Activated CD4-positive, alpha-beta memory T cell treated with anti-CD3 and anti-CD28 coated beads for 36 hours (primary cell): ENCODE measurements at regions of chr2 and their contacts with region 1.

Region 1: GRCh38 chr2:206159346-206160124 is at the starts of genes EEF1B2 and NDUFS1:
- DNase-seq: peak; percentile 98
- H3K4me3 Mint-ChIP-seq: peak within 1 kb of the TSS; percentile 96
- H3K27ac Mint-ChIP-seq: peak within 1 kb of the TSS; percentile 97
- H3K4me1 Mint-ChIP-seq: peaks cover 52% of the 10 kb centered on the region
- H3K27me3 Mint-ChIP-seq: no peaks in the 10 kb centered on the region
- total RNA-seq, gene EEF1B2: 1,180 to 1,194 TPM
- total RNA-seq, gene NDUFS1: 79.2 to 80.8 TPM

Region 2: GRCh38 chr2:206085742-206086445 is 73.6 kb before region 1 on chr2 and contains the start of gene INO80D:
- CTCF ChIA-PET with region 1: interaction called, 3 read pairs
- POLR2A ChIA-PET with region 1: interaction called, 3 read pairs
- intact Hi-C with region 1: loop called (anchors 1 kb)
- DNase-seq: peak; percentile 87
- H3K4me3 Mint-ChIP-seq: peak within 1 kb of the TSS; percentile 99
- H3K27ac Mint-ChIP-seq: peak within 1 kb of the TSS; percentile 100
- H3K4me1 Mint-ChIP-seq: peaks cover 14% of the 10 kb centered on the region
- H3K27me3 Mint-ChIP-seq: no peaks in the 10 kb centered on the region
- total RNA-seq, gene INO80D: 14.5 to 15.3 TPM

Region 3: DNA sequence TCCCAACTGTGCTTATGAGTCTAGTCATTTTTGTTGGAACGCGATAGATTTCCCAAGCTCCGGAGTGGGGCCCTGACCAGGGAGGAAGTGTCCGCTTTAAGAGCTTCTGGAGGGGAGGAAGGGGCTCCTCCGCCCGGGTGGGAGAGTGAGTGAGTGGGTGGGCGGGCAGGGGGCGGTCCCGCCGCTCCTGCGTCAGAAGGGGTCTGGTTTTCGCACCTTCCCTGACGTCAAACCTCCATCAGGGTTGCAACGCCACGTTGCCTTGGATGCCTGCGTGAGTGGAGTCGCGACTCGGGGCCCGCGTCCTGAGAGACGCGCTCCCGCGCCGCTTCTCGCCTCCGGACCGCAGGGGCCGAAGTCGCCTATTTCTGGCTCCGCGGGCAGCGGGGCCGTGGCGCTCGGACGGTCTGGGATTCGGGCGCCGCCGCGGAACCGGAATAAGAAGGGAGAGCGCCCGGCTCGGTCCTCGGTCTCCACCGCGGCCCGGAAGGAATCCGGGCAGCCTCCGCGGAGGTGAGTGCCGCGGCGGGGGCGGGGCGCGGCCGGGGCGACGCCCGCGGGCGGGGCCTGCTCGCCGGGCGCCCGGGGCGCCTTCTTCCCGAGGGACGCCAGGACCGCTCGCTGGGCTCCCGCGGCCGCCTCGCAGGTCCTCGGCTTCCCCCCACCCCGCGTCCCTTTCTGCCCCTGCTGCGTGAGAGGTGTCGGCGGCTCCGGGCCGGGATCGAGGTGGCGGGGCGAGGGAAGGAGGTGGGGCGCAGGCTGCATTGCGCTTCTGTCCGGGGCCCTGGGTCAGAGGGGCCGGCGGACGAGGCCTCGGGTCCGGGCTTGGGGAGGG is 115.1 kb after region 1 on chr2 and contains the start of gene ZDBF2:
- CTCF ChIA-PET with region 1: interaction called, 4 read pairs
- POLR2A ChIA-PET with region 1: no interaction called
- intact Hi-C with region 1: loop called (anchors 1 kb)
- DNase-seq: peak; percentile 60
- H3K4me3 Mint-ChIP-seq: peak within 1 kb of the TSS; percentile 80
- H3K27ac Mint-ChIP-seq: peak within 1 kb of the TSS; percentile 73
- H3K4me1 Mint-ChIP-seq: peaks cover 21% of the 10 kb centered on the region
- H3K27me3 Mint-ChIP-seq: peaks cover 42% of the 10 kb centered on the region
- total RNA-seq, gene ZDBF2: 7.4 to 7.8 TPM

Region 4: DNA sequence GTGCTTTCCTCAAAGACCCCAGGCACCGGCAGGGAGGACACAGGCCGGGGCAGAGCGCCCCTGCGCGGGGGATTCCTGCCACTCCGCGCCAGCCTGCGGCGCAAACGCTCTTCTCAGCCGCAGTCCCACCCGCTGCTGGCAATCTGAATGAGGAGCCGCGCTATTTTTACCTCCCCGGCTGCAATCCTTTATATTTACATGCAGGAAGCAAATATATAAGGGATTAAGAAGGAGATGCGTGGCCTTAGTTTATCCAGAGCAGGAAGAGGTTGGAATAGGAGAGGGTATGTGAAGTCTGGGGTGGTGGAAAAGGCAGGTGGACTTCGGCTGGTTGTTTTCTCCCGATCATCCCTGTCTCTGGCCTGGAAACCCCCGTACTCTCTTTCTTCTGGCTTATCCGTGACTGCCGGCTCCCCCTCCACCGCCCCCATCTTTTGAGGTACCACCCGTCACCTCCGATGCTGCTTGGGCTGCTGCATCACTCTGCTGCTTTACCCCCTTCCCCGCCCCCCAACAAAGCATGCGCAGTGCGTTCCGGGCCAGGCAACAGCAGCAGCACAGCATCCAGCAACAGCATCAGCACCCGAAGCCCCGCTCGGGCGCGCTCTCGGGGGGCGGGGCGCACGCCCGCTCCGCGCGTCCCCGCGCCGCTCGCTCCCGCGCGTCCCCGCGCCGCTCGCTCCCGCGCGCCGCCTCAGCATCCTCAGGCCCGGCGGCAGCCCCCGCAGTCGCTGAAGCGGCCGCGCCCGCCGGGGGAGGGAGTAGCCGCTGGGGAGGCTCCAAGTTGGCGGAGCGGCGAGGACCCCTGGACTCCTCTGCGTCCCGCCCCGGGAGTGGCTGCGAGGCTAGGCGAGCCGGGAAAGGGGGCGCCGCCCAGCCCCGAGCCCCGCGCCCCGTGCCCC is 283.5 kb after region 1 on chr2 and contains the start of gene ADAM23:
- CTCF ChIA-PET with region 1: no interaction called
- POLR2A ChIA-PET with region 1: no interaction called
- intact Hi-C with region 1: loop called (anchors 5 kb)
- DNase-seq: peak; percentile 71
- H3K4me3 Mint-ChIP-seq: peak within 1 kb of the TSS; percentile 79
- H3K27ac Mint-ChIP-seq: no peak within 1 kb of the TSS
- H3K4me1 Mint-ChIP-seq: peaks cover 18% of the 10 kb centered on the region
- H3K27me3 Mint-ChIP-seq: peaks cover 57% of the 10 kb centered on the region
- total RNA-seq, gene ADAM23: 1.8 to 2.3 TPM